AG04450 (cell line): ENCODE measurements at regions of chr6 and their contacts with region 1.

Region 1: GRCh38 chr6:90216072-90216977 is 80.3 kb downstream of the BACH2 start:
- DNase-seq: no peak
- H3K4me3 ChIP-seq: no peak overlapping the region
- H3K27ac ChIP-seq: no peak overlapping the region
- H3K27me3 ChIP-seq: no peaks in the 10 kb centered on the region
- CTCF ChIP-seq: no peak

Region 2: GRCh38 chr6:90098001-90098531 is 118.3 kb before region 1 on chr6:
- CTCF ChIA-PET with region 1: no interaction called
- POLR2A ChIA-PET with region 1: interaction called, 13 read pairs
- DNase-seq: peak; percentile 71
- H3K4me3 ChIP-seq: no peak overlapping the region
- H3K27ac ChIP-seq: peak overlapping the region; percentile 80
- H3K27me3 ChIP-seq: no peaks in the 10 kb centered on the region
- CTCF ChIP-seq: peak; percentile 62

Region 3: GRCh38 chr6:90179190-90180169 is 36.8 kb before region 1 on chr6:
- CTCF ChIA-PET with region 1: no interaction called
- POLR2A ChIA-PET with region 1: interaction called, 16 read pairs
- DNase-seq: no peak
- H3K4me3 ChIP-seq: no peak overlapping the region
- H3K27ac ChIP-seq: no peak overlapping the region
- H3K27me3 ChIP-seq: no peaks in the 10 kb centered on the region
- CTCF ChIP-seq: peak; percentile 50

Region 4: DNA sequence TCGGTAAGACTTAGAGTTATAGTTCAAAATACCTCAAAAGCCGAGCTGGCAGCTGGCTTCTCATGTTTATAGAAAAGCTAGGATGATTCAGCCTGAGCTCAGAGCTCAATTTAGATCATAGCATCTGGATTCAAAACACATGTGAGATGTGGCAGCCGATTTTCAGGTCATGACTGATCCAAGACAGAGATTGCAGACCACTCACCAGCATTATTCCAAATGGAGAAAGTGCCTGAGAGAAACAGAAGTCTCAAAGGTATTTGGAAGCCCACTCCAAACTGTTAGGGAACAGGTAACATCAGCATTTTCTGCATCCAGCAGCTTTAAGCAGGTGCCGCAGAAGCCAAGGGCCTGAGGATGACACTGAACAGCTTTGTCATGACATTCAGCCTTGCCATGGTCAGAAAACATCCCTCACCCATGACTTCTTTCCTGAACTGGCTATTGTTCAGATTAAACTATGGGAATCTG is 21.9 kb before region 1 on chr6:
- CTCF ChIA-PET with region 1: interaction called, 4 read pairs
- POLR2A ChIA-PET with region 1: interaction called, 24 read pairs
- DNase-seq: peak; percentile 71
- H3K4me3 ChIP-seq: peak overlapping the region; percentile 34; the same call in 1 of the 2 replicates
- H3K27ac ChIP-seq: peak overlapping the region; percentile 90
- H3K27me3 ChIP-seq: no peaks in the 10 kb centered on the region
- CTCF ChIP-seq: no peak

Region 5: DNA sequence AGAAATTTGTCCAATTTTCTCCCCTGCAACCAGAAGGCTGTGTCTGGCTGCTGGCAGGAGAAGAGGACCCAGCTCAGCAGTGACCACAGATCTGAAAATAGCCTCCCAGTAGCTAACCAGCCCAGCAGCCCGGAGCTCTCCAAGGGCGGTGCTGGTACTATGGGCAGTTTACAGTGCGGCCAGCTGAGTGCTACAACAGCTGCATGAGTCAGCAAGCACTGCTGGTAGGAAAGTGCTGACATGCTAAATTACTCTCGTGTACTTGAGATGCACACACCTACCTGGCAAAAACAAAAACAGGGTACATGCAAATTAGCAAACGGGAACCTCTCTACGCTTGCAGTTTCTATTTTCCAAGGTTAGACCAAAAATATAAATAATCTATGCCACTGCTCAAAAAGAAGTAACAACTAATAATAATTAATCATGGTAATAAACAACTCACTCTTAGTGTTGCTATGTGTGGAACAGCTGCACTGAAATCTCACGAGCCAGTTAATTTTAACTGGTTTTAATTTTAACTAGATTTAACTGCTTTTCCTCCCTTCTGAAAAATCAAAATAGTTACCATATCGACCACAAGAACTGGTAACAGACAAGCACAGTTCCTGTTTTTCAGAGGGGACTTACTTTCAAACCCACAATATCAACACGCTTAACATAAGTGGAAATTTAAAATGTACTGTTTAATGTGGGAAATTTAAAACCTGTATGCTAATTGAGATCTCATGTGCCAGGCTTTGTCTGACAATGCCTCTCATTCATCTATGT is 69.5 kb after region 1 on chr6:
- CTCF ChIA-PET with region 1: interaction called, 4 read pairs
- POLR2A ChIA-PET with region 1: interaction called, 11 read pairs
- DNase-seq: peak; percentile 77
- H3K4me3 ChIP-seq: peak overlapping the region; percentile 53
- H3K27ac ChIP-seq: peak overlapping the region; percentile 59
- H3K27me3 ChIP-seq: no peaks in the 10 kb centered on the region
- CTCF ChIP-seq: no peak

Region 6: DNA sequence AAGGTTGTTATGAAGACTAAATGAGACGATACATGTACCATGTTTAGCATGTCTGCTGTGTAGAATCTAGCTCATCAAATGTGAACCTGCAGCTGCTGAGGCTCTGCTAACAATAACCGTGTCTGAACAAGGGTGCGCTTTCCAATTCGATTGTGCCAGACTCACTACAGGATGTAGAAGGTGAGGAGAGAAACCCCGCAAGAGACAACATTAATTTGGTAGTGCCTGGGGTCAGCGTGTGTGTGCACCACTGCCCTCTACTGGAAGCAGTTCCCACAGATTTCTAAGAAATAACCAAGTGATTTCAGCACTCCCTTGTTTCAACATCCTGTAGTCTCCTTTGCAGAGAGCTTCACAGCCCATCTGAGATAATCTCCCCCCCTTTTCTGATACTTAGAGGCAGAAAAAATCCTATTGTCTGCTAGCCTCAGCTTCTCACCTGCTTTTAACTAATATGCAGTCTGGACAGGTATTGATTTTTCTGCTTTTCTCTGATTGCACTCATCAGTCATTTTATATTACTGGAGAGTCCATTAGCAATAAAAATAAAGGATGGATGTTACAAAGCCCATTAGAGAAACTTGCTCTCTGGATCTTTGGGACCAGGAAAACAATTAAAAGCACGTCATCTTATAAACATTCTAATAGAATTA is 177.0 kb after region 1 on chr6:
- CTCF ChIA-PET with region 1: interaction called, 5 read pairs
- POLR2A ChIA-PET with region 1: interaction called, 12 read pairs
- DNase-seq: peak; percentile 32
- H3K4me3 ChIP-seq: no peak overlapping the region
- H3K27ac ChIP-seq: no peak overlapping the region
- H3K27me3 ChIP-seq: peaks cover 10% of the 10 kb centered on the region
- CTCF ChIP-seq: peak; percentile 87